Activated CD8-positive, alpha-beta T cell treated with anti-CD3 and anti-CD28 coated beads for 36 hours (primary cell): ENCODE measurements at regions of chr1 and their contacts with region 1.

Region 1: GRCh38 chr1:38489844-38490270 is 369.7 kb downstream of the RRAGC start:
- DNase-seq: peak; percentile 73
- ATAC-seq: peak; percentile 73
- H3K4me3 Mint-ChIP-seq: no peak overlapping the region
- H3K27ac Mint-ChIP-seq: no peak overlapping the region
- H3K4me1 Mint-ChIP-seq: no peaks in the 10 kb centered on the region
- H3K27me3 Mint-ChIP-seq: peaks cover 18% of the 10 kb centered on the region
- CTCF ChIP-seq: peak; percentile 74

Region 2: DNA sequence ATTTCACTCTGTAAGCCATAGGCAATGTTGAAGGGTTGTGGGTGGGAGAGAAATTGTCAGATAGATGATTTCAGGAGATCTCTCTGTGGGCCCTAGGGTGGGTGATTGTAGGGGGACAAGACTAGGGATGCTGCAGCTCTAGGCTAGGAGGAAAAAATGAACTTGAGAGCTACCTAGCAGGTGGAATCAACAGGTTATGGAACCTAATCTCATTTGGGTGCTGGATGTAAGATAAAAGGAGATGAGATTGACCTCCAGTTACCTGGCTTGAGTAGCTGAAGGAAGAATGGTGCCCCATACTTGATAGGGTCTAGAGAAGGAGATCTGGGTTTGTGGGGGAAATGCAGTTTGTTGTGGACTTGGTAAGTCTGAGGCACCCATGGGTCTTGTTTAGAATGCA is 26.8 kb before region 1 on chr1:
- CTCF ChIA-PET with region 1: no interaction called
- POLR2A ChIA-PET with region 1: no interaction called
- intact Hi-C with region 1: no loop called
- DNase-seq: no peak
- ATAC-seq: no peak
- H3K4me3 Mint-ChIP-seq: no peak overlapping the region
- H3K27ac Mint-ChIP-seq: no peak overlapping the region
- H3K4me1 Mint-ChIP-seq: no peaks in the 10 kb centered on the region
- H3K27me3 Mint-ChIP-seq: peaks cover 14% of the 10 kb centered on the region
- CTCF ChIP-seq: no peak

Region 3: DNA sequence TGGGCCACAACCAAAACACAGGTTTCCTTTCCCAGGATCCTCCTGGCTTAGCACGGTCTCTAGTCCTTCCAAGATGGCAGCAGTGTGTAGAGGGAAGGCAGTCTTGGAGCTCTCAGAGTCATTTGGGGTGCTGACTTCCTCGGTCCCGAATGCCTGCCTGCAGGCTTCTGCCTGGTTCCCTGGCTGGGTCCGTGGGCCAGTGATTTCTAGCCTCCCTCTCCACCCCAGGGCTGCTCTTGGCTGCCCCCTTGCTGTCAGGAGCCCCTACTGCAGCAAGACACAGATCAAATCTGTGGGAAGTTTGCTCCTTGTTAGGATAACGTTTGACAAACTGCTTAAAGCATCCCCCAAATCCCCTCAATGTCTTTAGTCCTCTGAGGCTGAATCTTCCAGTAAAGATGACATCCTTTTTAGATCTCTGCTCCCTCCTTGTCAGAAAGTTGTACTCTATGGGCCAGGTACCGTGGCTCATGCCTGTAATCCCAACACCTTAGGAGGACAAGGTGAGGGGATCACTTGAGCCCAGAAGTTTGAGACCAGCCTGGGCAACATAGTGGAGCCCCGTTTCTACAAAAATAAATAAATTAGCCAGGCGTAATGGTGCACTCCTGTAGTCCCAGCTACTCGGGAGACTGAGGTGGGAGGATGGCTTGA is 97.3 kb after region 1 on chr1:
- CTCF ChIA-PET with region 1: interaction called, 5 read pairs
- POLR2A ChIA-PET with region 1: no interaction called
- intact Hi-C with region 1: loop called (anchors 10 kb)
- DNase-seq: peak; percentile 63
- ATAC-seq: peak; percentile 77
- H3K4me3 Mint-ChIP-seq: no peak overlapping the region
- H3K27ac Mint-ChIP-seq: no peak overlapping the region
- H3K4me1 Mint-ChIP-seq: peaks cover 12% of the 10 kb centered on the region
- H3K27me3 Mint-ChIP-seq: peaks cover 23% of the 10 kb centered on the region
- CTCF ChIP-seq: peak; percentile 94